ENCODE measurements at regions of chr1 and their contacts with region 1.

Region 1: GRCh38 chr1:170214117-170215032 is 68.6 kb downstream of the NTMT2 start:
- DNase-seq: no peak
- H3K4me3 ChIP-seq: peak overlapping the region in 1 of 2 donors; percentile 25
- H3K27ac ChIP-seq: peak overlapping the region; percentile 79 to 83
- H3K4me1 ChIP-seq: peaks cover 7 to 15% of the 10 kb centered on the region in 2 donors
- H3K27me3 ChIP-seq: no peaks in the 10 kb centered on the region
- CTCF ChIP-seq: no peak

Region 2: DNA sequence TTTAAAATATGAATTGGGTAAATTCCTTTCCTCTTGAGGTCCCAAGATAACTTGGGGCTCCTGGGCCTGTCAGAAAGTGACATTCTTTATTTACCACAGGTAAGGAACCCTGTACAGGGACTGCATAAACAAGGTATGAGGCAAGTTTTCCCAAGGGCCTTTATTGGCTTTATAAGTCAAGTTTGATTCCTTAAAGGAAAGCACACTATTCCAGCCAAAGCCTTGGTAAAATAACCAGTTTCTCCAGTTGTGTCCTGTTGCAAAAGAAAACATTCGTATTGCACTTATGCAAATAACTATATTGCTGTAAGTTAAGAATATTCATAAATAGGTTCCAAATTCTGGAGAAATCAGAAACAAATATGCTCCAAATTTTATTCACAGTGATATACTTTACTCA is 397.8 kb before region 1 on chr1:
- intact Hi-C with region 1: no loop called
- DNase-seq: no peak
- H3K4me3 ChIP-seq: no peak overlapping the region
- H3K27ac ChIP-seq: no peak overlapping the region
- H3K4me1 ChIP-seq: no peaks in the 10 kb centered on the region
- H3K27me3 ChIP-seq: no peaks in the 10 kb centered on the region
- CTCF ChIP-seq: no peak

Region 3: DNA sequence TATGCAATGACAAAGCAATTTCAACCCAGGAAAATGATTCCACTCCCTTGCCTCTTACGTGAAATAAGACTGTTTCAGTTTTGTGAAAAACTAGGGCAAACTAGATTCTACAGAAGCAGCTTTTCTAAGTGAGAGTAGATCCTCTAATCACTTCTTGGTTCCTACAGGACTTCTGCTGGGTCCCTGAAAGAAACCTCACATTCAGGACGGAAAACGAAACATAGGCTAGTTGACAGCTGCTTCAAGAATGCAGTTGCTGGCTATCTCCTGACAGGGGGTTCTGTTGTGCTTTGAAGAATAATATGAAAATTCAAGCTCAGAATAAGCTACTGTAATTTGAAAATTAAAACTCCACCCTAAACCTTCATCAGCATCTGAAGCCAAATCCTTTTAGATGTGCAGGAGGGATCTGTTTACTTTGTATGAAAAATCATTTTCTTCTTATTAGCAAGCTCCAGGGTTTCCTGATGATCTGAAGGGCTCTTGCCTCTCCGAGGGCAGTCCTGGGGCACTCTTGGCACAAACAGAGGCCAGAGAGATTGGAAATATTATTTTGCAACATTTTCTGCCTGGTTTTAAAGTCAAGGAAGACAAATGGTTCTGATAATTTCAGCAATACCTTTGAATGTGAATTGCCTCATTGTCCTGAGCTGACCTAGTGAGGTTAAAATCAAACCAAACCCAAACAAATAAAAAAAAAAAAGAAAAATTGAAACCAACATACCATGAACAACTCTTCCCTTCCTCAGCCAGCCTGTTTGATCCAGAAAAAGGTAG is 13.6 kb before region 1 on chr1:
- intact Hi-C with region 1: loop called (anchors 1 kb)
- DNase-seq: no peak
- H3K4me3 ChIP-seq: peak overlapping the region in 1 of 2 donors; percentile 26
- H3K27ac ChIP-seq: peak overlapping the region; percentile 36 to 57
- H3K4me1 ChIP-seq: peaks cover 0 to 17% of the 10 kb centered on the region in 2 donors
- H3K27me3 ChIP-seq: no peaks in the 10 kb centered on the region
- CTCF ChIP-seq: no peak

Region 4: GRCh38 chr1:170586321-170587252 is 372.2 kb after region 1 on chr1:
- intact Hi-C with region 1: loop called (anchors 5 kb)
- DNase-seq: peak in 1 of 2 donors; percentile 70
- H3K4me3 ChIP-seq: peak overlapping the region; percentile 32 to 64
- H3K27ac ChIP-seq: peak overlapping the region; percentile 81 to 85
- H3K4me1 ChIP-seq: peaks cover 0 to 11% of the 10 kb centered on the region in 2 donors
- H3K27me3 ChIP-seq: no peaks in the 10 kb centered on the region
- CTCF ChIP-seq: no peak

Region 5: DNA sequence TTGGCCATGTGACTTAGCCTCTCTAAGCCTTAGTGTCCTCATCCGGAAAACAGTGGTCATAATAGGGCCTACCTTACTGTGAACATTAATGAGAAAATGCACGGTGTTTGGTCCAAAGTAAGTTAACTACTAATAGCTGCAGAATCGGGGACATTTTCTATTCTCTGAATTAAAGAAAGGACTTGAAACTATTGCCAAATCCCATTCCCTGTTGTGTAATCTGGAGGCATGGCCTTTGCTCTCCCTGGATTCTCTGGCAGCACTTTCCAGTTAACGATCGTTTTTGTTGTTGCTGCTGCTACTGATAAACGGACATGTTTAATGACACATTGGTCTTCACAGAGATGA is 1130.1 kb after region 1 on chr1:
- intact Hi-C with region 1: no loop called
- DNase-seq: peak in 1 of 2 donors; percentile 68
- H3K4me3 ChIP-seq: no peak overlapping the region
- H3K27ac ChIP-seq: peak overlapping the region; percentile 48 to 62
- H3K4me1 ChIP-seq: peaks cover 0 to 19% of the 10 kb centered on the region in 2 donors
- H3K27me3 ChIP-seq: no peaks in the 10 kb centered on the region
- CTCF ChIP-seq: no peak